Activated CD8-positive, alpha-beta T cell treated with anti-CD3 and anti-CD28 coated beads for 36 hours (primary cell): ENCODE measurements at regions of chr1 and their contacts with region 1.

Region 1: GRCh38 chr1:235843461-235843961 is 23.2 kb downstream of the LYST start:
- DNase-seq: no peak
- ATAC-seq: peak; percentile 69
- H3K4me3 Mint-ChIP-seq: no peak overlapping the region
- H3K27ac Mint-ChIP-seq: no peak overlapping the region
- H3K4me1 Mint-ChIP-seq: peaks cover 78% of the 10 kb centered on the region
- H3K27me3 Mint-ChIP-seq: no peaks in the 10 kb centered on the region
- CTCF ChIP-seq: peak; percentile 71

Region 2: GRCh38 chr1:235783148-235783776 is 60.2 kb before region 1 on chr1:
- CTCF ChIA-PET with region 1: interaction called, 12 read pairs
- POLR2A ChIA-PET with region 1: no interaction called
- intact Hi-C with region 1: no loop called
- DNase-seq: no peak
- ATAC-seq: no peak
- H3K4me3 Mint-ChIP-seq: no peak overlapping the region
- H3K27ac Mint-ChIP-seq: no peak overlapping the region
- H3K4me1 Mint-ChIP-seq: no peaks in the 10 kb centered on the region
- H3K27me3 Mint-ChIP-seq: no peaks in the 10 kb centered on the region
- CTCF ChIP-seq: peak; percentile 78

Region 3: GRCh38 chr1:235831148-235831547 is 12.4 kb before region 1 on chr1:
- CTCF ChIA-PET with region 1: interaction called, 65 read pairs
- POLR2A ChIA-PET with region 1: interaction called, 8 read pairs
- intact Hi-C with region 1: no loop called
- DNase-seq: peak; percentile 77
- ATAC-seq: peak; percentile 100
- H3K4me3 Mint-ChIP-seq: no peak overlapping the region
- H3K27ac Mint-ChIP-seq: peak overlapping the region; percentile 77
- H3K4me1 Mint-ChIP-seq: peaks cover 22% of the 10 kb centered on the region
- H3K27me3 Mint-ChIP-seq: no peaks in the 10 kb centered on the region
- CTCF ChIP-seq: no peak

Region 4: DNA sequence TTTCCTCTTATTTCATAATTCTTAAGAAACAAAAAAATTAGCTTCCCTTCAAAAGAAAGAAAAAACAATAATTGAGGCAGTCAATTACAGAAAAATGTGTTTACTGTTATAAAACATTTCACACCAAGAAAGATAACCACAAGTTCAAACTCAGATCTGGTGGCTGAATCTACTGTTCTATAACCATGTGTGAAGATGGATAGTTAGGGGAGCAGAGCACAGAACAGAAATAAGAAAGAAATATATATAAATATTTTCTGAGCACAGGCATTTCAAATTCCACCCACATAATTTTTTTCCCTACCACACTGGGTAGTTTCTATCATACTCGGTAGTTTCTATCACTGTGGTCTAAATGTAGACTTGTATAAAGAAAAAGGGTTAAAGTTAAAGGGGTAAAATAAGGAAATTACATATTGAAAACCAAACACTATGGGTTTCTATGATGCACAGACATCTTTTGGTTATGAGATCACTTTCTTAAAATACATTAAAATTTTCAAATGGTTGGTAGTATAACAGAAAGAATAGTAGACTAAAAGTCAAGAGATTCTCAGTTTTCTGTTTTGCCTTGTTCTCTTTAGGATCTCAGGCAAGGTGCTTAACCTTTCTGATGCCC is 12.4 kb after region 1 on chr1:
- CTCF ChIA-PET with region 1: interaction called, 23 read pairs
- POLR2A ChIA-PET with region 1: interaction called, 3 read pairs
- intact Hi-C with region 1: no loop called
- DNase-seq: no peak
- ATAC-seq: peak; percentile 74
- H3K4me3 Mint-ChIP-seq: peak overlapping the region; percentile 47
- H3K27ac Mint-ChIP-seq: peak overlapping the region; percentile 95
- H3K4me1 Mint-ChIP-seq: peaks cover 55% of the 10 kb centered on the region
- H3K27me3 Mint-ChIP-seq: no peaks in the 10 kb centered on the region
- CTCF ChIP-seq: no peak